Gastrocnemius medialis (tissue), 4 donors: ENCODE measurements at regions of chr1 and their contacts with region 1.

Region 1: GRCh38 chr1:230215031-230215430 is 148.0 kb downstream of the GALNT2 start:
- DNase-seq: peak; percentile 65 to 83
- ATAC-seq: peak; percentile 74 to 88
- H3K4me3 ChIP-seq: peak overlapping the region in 1 of 4 donors; percentile 14
- H3K27ac ChIP-seq: peak overlapping the region; percentile 73 to 81 (median 77)
- H3K4me1 ChIP-seq: peaks cover 52 to 75% of the 10 kb centered on the region in 2 donors
- H3K27me3 ChIP-seq: no peaks in the 10 kb centered on the region
- CTCF ChIP-seq: peak in 4 of 5 experiments; percentile 55 to 78 (median 74)
- POLR2A ChIP-seq: no peak

Region 2: GRCh38 chr1:229661022-229661877 is 553.8 kb before region 1 on chr1:
- in situ Hi-C with region 1: no loop called
- intact Hi-C with region 1: loop called (anchors 10 kb)
- DNase-seq: peak; percentile 64 to 79
- ATAC-seq: peak; percentile 86 to 94
- H3K4me3 ChIP-seq: no peak overlapping the region
- H3K27ac ChIP-seq: peak overlapping the region in 1 of 4 donors; percentile 12
- H3K4me1 ChIP-seq: peaks cover 0 to 7% of the 10 kb centered on the region in 2 donors
- H3K27me3 ChIP-seq: no peaks in the 10 kb centered on the region
- CTCF ChIP-seq: peak; percentile 84 to 93 (median 86)
- POLR2A ChIP-seq: no peak

Region 3: DNA sequence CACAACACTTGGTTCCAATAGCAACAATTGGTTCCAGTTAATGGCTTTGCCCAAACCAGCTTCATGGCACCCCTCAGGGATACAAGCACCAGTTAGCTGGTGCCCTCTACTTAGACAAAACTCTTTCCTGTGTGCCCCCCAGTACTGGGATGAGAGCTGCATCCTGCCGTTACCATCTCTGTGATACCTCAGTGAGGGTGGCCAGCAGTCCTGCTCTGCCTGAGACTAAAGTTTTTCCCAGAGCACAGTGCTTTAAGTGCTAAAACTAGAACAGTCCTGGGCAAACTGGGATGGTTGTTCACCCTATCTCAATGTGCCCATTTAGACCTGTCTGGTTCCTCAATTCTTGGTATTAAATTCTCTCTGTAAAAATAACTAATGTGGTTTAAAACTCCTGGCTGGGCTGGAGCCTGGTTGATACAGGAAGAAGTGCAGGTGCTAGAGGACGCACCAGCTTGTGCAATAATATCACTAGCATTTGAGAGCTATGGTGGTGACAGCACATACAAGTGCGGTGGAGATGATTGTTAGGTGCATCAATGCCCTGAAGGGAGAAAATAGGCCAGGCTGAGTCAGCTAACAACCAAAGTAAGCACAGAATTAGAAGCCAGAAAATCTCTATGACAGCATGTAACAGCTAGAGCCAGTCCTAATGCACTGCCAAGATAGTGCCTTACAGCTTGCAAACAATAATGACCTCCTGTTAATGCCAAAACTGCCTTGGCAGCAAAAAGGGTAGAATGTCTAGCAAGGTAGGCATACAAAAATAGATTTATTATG is 327.8 kb before region 1 on chr1:
- in situ Hi-C with region 1: no loop called
- intact Hi-C with region 1: loop called (anchors 5 kb)
- DNase-seq: peak; percentile 78 to 88
- ATAC-seq: peak; percentile 84 to 86
- H3K4me3 ChIP-seq: no peak overlapping the region
- H3K27ac ChIP-seq: peak overlapping the region; percentile 84 to 97 (median 95)
- H3K4me1 ChIP-seq: peaks cover 42 to 55% of the 10 kb centered on the region in 2 donors
- H3K27me3 ChIP-seq: no peaks in the 10 kb centered on the region
- CTCF ChIP-seq: no peak
- POLR2A ChIP-seq: no peak

Region 4: DNA sequence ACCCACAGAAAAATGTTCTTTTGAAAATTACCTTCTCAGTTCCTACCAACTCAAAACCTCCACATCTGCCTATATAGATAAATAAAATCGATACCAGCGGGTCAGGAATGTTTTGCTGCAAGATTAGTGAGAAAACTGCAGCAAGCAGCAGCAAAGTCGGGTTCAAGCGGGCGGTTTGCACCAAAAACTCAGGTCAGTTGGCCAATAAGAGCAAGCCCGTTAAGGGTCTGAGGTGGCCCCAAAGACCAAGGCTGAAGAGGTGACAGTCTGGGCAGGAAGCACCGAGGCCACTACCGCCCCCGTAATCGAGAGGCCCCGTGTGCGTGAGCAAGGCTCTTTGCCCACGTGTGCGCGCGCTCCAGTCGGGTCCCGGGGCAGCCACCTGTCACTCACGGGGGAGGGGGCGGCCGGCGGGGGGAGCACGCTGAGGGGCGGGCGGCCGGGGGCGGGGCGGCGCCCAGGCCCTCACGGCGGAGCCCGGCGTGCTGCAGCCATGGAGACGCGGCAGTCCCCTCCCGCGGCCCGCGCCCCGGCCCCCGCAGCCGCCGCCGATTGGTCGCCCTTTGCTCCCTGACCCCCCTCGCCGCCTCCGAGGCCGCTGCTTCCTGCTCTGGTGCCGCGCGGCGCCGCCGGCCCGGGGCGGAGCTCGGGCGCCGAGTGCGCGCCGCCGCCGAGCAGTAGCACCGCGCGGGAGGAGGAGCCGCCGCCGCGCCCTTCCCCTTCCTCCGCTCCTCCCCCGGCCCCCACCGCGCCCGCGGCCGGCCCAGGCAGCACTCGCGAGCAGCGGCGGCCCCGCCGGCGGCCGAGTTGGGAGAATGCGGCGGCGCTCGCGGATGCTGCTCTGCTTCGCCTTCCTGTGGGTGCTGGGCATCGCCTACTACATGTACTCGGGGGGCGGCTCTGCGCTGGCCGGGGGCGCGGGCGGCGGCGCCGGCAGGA is 148.3 kb before region 1 on chr1 and contains the start of gene GALNT2:
- in situ Hi-C with region 1: loop called in 2 of 4 experiments (anchors 10 kb)
- intact Hi-C with region 1: loop called (anchors 2 kb)
- DNase-seq: peak; percentile 73 to 85
- ATAC-seq: peak; percentile 76 to 77
- H3K4me3 ChIP-seq: peak within 1 kb of the TSS; percentile 73 to 88 (median 80)
- H3K27ac ChIP-seq: peak within 1 kb of the TSS; percentile 90 to 97 (median 97)
- H3K4me1 ChIP-seq: peaks cover 42 to 43% of the 10 kb centered on the region in 2 donors
- H3K27me3 ChIP-seq: no peaks in the 10 kb centered on the region
- CTCF ChIP-seq: peak in 1 of 5 experiments; percentile 11
- POLR2A ChIP-seq: peak; percentile 94 to 96
- total RNA-seq, gene GALNT2: 73.7 to 106 (median 78.3) TPM

Region 5: GRCh38 chr1:230104395-230105244 is 110.4 kb before region 1 on chr1:
- in situ Hi-C with region 1: no loop called
- intact Hi-C with region 1: loop called (anchors 2 kb)
- DNase-seq: peak; percentile 98 to 100
- ATAC-seq: peak; percentile 89 to 93
- H3K4me3 ChIP-seq: peak overlapping the region; percentile 5 to 25 (median 15)
- H3K27ac ChIP-seq: peak overlapping the region; percentile 83 to 89 (median 84)
- H3K4me1 ChIP-seq: peaks cover 54 to 57% of the 10 kb centered on the region in 2 donors
- H3K27me3 ChIP-seq: no peaks in the 10 kb centered on the region
- CTCF ChIP-seq: peak in 3 of 5 experiments; percentile 14 to 45 (median 25)
- POLR2A ChIP-seq: peak in 1 of 2 donors; percentile 33

Region 6: DNA sequence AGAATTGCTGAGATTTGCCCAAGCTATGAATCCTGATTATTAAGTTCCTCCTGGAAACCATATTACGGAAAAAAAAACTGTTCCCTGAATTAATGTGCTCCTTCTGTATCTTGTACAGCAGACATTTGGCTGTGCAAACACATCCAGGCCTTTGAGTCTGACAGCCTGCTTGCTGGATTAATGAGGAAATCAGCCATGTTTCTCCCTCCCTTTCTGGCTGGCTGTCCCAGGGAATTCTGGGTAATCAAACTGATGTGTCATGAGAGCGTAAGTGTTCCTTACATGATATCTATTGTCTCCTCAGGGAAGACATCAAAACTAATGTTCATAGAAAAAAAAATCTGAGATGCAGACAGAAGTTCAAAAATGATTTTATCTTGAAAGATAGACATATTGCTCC is 192.3 kb after region 1 on chr1:
- in situ Hi-C with region 1: no loop called
- intact Hi-C with region 1: no loop called
- DNase-seq: no peak
- ATAC-seq: no peak
- H3K4me3 ChIP-seq: no peak overlapping the region
- H3K27ac ChIP-seq: no peak overlapping the region
- H3K4me1 ChIP-seq: no peaks in the 10 kb centered on the region
- H3K27me3 ChIP-seq: no peaks in the 10 kb centered on the region
- CTCF ChIP-seq: no peak
- POLR2A ChIP-seq: no peak